PC-3 (cell line): ENCODE measurements at regions of chr4 and their contacts with region 1.

Region 1: DNA sequence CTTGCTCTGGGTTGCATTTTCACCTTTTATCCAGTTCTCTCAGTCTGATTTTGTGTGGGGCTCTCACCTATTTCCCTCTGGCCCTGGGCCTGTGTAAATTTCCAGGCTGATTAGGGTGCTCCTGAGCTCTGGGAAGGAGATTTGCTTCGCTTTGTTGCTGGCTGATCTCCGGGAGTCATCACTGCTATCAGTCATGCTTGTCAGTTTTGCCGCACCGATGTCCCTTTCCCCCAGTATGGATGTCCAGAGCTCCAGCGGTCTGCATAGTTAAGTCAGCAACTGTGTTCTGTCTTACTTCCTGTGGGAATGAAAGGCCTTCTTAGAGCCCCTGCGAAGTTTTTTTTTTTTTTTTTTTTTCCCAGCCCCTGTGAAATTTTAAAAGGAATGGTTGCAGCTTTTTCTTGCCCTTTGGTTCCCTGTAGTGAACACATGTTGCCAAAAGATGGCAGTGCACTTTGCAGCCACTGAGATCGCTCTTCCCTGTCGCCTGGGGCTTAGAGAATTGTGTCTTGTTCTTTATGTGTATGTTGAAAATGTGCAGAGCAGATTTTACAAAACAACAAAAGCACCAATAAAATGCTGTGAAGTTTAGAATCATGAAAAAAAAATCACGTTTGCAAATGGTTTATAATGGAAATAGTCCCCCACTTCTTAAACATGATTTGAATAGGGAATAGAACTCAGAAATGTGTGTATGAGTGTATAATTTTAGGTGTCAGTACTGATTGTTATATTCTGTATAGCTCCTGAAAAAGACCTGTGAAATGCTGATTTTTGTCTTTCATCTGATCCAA is 109.1 kb upstream of the SLC4A4 start:
- DNase-seq: peak; percentile 70
- ATAC-seq: peak; percentile 88
- H3K4me3 ChIP-seq: peak overlapping the region; percentile 53
- H3K27ac ChIP-seq: no peak overlapping the region
- H3K4me1 ChIP-seq: peaks cover 6% of the 10 kb centered on the region; the same call in 1 of the 2 replicates
- H3K27me3 ChIP-seq: no peaks in the 10 kb centered on the region
- CTCF ChIP-seq: peak; percentile 90

Region 2: GRCh38 chr4:70927502-70928137 is 302.1 kb before region 1 on chr4:
- CTCF ChIA-PET with region 1: no interaction called
- POLR2A ChIA-PET with region 1: no interaction called
- intact Hi-C with region 1: no loop called
- DNase-seq: no peak
- ATAC-seq: no peak
- H3K4me3 ChIP-seq: no peak overlapping the region
- H3K27ac ChIP-seq: no peak overlapping the region
- H3K4me1 ChIP-seq: peaks cover 16% of the 10 kb centered on the region
- H3K27me3 ChIP-seq: no peaks in the 10 kb centered on the region
- CTCF ChIP-seq: no peak

Region 3: GRCh38 chr4:71216316-71216959 is 13.2 kb before region 1 on chr4:
- CTCF ChIA-PET with region 1: interaction called, 4 read pairs
- POLR2A ChIA-PET with region 1: interaction called, 15 read pairs
- intact Hi-C with region 1: no loop called
- DNase-seq: no peak
- ATAC-seq: no peak
- H3K4me3 ChIP-seq: no peak overlapping the region
- H3K27ac ChIP-seq: no peak overlapping the region
- H3K4me1 ChIP-seq: no peaks in the 10 kb centered on the region
- H3K27me3 ChIP-seq: no peaks in the 10 kb centered on the region
- CTCF ChIP-seq: no peak

Region 4: DNA sequence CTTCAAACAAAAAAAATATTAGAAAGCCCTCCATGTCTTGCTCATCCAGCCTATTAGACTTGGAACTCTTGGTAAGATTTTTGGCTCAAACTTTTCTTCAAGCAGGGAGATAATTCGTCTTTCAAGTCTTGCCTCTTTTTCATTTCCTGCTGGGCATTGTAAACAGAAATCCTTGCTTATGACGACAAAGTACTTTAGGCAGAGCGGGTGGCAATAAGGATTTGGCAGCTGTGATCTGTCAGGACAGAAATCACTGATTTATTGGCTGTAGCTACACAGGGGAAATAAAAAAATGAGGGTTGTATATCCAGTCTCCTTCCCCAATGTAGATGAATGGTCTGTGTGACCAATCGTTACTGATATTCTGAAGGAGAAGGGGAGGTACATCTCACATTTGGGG is 230.7 kb after region 1 on chr4:
- CTCF ChIA-PET with region 1: no interaction called
- POLR2A ChIA-PET with region 1: no interaction called
- intact Hi-C with region 1: no loop called
- DNase-seq: peak; percentile 20
- ATAC-seq: no peak
- H3K4me3 ChIP-seq: no peak overlapping the region
- H3K27ac ChIP-seq: no peak overlapping the region
- H3K4me1 ChIP-seq: peaks cover 14% of the 10 kb centered on the region
- H3K27me3 ChIP-seq: no peaks in the 10 kb centered on the region
- CTCF ChIP-seq: no peak